IMR-90 (cell line): ENCODE measurements at regions of chr19 and their contacts with region 1.

Region 1: DNA sequence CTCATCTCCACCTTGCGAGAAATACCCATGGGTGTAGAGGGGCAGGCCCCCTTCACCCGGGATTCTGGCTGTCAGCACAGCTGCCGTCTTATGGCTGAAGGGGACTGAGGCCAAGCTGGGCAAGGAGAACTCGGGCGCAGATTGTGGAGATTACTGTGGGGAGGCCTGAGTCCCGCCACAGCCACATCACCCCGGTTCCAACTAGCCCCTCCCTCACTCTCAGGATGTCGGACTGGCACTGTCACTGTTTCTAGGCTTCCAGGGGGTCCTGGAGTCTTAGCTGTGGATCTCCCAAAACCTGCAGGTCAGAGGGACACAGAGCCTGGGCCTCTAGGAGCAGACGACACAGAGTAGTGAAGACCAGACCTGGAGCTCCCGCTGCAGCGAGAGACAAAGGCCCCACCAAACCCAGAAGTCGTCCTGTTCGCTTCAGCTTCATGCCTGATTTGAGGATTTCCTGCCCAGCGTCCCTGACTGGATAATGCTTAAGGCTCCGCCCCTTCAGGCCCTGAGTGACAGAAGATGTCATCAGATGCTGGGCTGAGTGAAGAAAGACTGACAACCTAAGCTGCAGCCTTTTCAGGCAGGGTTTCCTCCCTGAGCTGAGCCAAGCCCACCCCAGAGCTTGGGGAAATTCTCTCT is 55.8 kb downstream of the ZNF93 start:
- DNase-seq: no peak
- ATAC-seq: no peak
- H3K4me3 ChIP-seq: no peak overlapping the region
- H3K27ac ChIP-seq: no peak overlapping the region
- H3K4me1 ChIP-seq: peaks cover 7% of the 10 kb centered on the region
- H3K27me3 ChIP-seq: no peaks in the 10 kb centered on the region
- CTCF ChIP-seq: no peak
- POLR2A ChIP-seq: no peak
- RAD21 ChIP-seq: no peak

Region 2: DNA sequence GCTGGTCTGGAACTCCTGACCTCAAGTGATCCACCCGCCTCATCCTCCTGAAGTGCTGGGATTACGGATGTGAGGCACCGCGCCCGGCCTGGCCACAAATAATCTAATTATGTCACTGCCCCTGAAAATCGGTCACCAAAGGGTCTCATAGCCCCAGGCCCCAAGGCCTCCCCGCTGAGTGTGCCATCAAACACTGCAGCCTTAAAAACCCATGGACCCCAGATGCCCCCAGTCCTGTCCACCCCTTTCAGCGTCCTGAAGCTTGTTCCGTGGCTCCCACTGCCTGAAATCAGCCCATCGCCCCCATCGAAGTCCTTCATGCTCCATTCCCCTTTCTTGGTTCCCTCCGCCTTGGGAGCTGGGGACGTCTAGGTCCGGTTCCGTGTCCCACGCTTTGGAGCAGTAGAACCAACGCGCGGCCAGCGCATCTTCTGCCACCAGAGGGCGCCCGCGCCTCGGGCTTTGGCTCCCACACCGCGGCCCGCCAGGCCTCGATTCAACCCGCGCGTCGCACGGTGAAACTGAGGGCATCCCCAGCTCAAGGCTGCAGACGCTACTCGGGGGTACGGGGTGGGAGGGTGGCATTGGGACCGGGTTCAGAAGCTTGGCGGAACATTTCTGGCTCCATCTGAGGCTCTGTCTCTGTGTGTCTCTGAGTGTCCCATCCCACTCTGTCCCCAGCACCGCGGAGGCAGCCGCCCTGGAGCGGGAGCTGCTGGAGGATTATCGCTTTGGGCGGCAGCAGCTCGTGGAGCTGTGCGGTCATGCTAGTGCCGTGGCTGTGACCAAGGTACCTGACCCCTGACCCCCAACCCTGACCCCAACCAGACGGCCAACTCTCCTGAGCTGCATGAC is 424.4 kb before region 1 on chr19:
- CTCF ChIA-PET with region 1: no interaction called
- POLR2A ChIA-PET with region 1: no interaction called
- dilution Hi-C with region 1: no loop called
- in situ Hi-C with region 1: loop called (anchors 25 kb)
- intact Hi-C with region 1: no loop called
- DNase-seq: peak; percentile 44
- ATAC-seq: peak; percentile 81
- H3K4me3 ChIP-seq: no peak overlapping the region
- H3K27ac ChIP-seq: no peak overlapping the region
- H3K4me1 ChIP-seq: peaks cover 5% of the 10 kb centered on the region
- H3K27me3 ChIP-seq: no peaks in the 10 kb centered on the region
- CTCF ChIP-seq: peak; percentile 96
- POLR2A ChIP-seq: peak; percentile 59; the same call in 1 of the 2 replicates
- RAD21 ChIP-seq: peak; percentile 95

Region 3: DNA sequence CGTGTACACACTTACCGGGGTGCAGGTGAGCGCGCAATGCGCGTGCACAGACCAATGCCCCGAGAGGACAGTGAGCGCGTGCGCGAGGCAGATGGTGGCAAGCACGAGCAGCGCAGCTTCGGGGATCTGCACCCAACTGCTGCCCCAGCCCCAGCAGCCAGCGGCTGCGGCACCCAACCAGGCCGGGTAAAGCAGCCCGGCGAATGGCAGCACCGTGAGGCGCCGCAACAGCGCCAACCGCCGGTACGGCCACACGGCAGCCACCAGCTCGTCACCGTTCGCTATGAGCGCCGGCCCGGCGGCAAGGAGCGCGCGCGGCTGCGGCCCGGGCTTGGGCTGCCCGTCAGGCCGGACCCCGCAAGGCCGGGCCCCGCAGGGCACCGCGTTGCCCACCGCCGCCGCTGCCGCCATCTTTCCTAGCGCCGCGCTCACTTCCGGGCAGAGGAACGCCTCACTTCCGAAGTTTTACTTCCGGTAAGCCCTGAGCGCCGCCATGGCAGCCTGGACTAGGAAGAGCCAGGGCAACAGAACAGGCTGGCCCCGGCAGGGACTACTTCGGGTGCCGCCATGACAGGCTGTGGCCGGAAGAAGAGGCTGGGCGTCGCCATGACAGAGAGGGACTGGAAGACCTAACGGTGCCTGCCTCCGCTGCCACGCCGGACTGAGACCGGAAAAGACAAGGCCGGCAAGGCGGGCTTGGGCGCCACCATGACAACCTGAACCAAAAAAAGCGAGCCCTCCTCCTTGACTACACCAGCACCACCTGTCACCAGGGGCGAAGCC is 293.1 kb before region 1 on chr19 and contains the start of gene ATP13A1:
- CTCF ChIA-PET with region 1: no interaction called
- POLR2A ChIA-PET with region 1: no interaction called
- dilution Hi-C with region 1: no loop called
- in situ Hi-C with region 1: no loop called
- intact Hi-C with region 1: loop called (anchors 2 kb)
- DNase-seq: peak; percentile 97
- ATAC-seq: peak; percentile 95
- H3K4me3 ChIP-seq: peak within 1 kb of the TSS; percentile 78
- H3K27ac ChIP-seq: peak within 1 kb of the TSS; percentile 93
- H3K4me1 ChIP-seq: peaks cover 9% of the 10 kb centered on the region; the same call in 1 of the 2 replicates
- H3K27me3 ChIP-seq: no peaks in the 10 kb centered on the region
- CTCF ChIP-seq: no peak
- POLR2A ChIP-seq: peak; percentile 76
- RAD21 ChIP-seq: no peak
- total RNA-seq, gene ATP13A1: 13.3 and 15.8 TPM in 2 replicates

Region 4: DNA sequence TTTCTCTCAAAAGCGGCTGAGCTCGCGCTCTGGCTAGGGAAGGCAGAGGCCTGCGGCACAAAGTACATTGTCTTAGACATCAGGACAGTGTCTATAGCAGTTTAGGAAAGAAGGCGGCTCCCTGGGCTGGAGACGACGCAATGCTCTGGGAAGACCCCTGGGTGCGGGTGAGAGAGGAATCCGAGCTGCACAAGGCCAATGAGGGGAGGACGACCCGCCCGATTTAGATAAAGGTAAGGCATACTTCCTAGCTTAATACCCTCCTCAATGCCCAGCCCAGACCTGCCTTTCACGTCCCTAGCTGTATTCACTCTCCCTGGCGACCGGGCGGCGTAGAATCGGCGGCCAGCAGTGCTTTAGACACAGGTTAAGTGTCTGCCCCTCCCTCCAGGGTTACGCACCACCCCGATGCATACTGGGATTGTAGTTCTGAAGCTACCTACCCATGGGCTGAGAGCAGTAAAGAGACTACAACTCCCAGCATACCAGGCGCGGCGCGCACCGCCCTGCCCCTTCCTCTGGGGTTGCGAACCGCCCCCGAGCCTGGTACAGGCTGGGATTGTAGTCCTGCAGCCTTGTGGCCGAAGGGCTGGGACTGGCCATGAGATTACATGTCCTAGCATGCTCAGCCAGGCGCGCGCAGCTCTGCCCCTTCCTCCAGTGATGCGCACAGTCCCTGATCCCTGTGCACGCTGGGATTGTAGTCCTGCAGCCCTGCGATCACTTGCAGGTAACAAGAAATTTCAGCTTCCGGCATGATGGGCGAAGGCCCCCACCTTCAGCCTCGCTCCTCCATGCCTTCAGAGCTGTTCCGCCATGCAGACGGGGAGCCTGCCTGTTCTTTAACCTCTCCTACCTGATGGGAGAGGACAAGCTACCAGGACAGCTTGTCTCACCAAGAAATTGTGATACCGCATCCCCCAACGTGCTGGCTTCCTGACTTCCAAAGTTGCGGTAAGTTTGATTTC is 180.2 kb before region 1 on chr19:
- CTCF ChIA-PET with region 1: no interaction called
- POLR2A ChIA-PET with region 1: no interaction called
- dilution Hi-C with region 1: no loop called
- in situ Hi-C with region 1: no loop called
- intact Hi-C with region 1: loop called (anchors 2 kb)
- DNase-seq: peak; percentile 98
- ATAC-seq: peak; percentile 99
- H3K4me3 ChIP-seq: peak overlapping the region; percentile 73
- H3K27ac ChIP-seq: peak overlapping the region; percentile 82
- H3K4me1 ChIP-seq: 0 out of 2 replicates have a peak, but pooled peaks cover 2% of the 10 kb centered on the region
- H3K27me3 ChIP-seq: no peaks in the 10 kb centered on the region
- CTCF ChIP-seq: no peak
- POLR2A ChIP-seq: no peak
- RAD21 ChIP-seq: no peak

Region 5: DNA sequence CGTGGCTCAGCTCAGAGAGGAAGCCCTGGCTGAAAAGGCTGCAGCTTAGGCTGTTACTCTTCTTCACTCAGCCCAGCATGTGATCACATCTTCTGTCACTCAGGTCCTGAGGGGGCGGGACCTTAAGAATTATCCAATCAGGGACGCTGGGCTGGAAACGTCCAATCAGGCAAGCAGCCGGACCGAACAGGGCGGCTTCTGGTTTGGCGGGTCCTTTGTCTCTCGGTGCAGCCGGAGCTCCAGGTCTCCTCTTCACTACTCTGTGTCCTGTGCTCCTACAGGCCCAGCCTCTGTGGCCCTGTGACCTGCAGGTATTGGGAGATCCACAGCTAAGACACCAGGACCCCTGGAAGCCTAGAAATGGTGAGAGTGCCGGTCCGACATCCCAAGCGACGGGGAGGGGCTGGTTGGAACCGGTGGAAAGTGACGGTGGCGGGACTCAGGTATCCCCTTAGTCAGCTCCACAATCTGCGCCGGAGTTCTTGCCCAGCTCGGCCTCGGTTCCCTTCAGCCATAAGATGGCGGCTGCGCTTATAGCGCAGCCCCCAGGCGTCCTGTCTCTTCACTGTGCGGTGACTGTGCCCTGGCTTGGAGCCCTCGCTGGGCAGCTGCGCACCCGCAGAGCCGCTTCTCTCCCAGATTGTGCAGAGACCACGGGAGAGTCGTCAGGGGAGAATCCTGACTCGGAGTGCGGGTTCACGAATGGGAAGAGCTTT is 55.7 kb before region 1 on chr19 and contains the start of gene ZNF93:
- CTCF ChIA-PET with region 1: no interaction called
- POLR2A ChIA-PET with region 1: no interaction called
- dilution Hi-C with region 1: no loop called
- in situ Hi-C with region 1: no loop called
- intact Hi-C with region 1: loop called (anchors 2 kb)
- DNase-seq: peak; percentile 96
- ATAC-seq: peak; percentile 94
- H3K4me3 ChIP-seq: peak within 1 kb of the TSS; percentile 73
- H3K27ac ChIP-seq: peak within 1 kb of the TSS; percentile 83
- H3K4me1 ChIP-seq: no peaks in the 10 kb centered on the region
- H3K27me3 ChIP-seq: no peaks in the 10 kb centered on the region
- CTCF ChIP-seq: no peak
- POLR2A ChIP-seq: peak; percentile 67; the same call in 1 of the 2 replicates
- RAD21 ChIP-seq: no peak
- total RNA-seq, gene ZNF93: 8.9 and 10.6 TPM in 2 replicates

Region 6: DNA sequence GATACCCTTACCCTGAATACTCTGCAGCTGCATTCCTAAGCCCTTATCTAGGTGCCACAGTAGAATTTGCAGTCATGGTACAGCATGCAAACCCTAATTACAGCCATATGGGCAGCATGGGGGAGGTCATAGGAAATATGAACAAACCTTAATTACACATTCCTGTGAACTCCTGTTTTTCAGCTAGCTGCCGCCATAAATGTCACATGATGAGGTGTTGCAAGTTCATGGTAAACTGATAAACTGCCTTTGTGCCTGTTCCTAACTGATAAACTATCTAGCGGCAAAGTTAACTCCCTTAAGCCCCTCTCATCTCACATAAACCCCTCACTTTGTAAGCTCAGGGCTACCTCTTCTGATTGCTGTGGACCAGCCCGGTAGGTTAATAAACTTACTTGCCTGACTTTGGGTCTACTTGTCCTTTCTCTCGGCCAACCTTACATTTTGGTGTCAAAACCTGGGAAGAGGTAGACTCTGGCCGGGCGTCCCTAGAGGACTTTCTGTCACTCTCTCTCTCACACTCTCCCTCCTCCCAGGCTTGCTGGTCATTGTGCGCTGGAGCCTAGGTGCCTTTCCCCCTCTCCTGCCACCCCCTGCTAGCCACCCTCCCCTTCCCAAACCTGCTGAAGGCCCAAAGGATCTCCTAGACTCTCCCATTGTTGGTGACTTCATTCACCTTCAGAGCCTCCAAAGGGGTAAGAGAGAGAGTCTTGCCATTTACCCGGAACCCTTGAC is 12.5 kb before region 1 on chr19:
- CTCF ChIA-PET with region 1: no interaction called
- POLR2A ChIA-PET with region 1: no interaction called
- dilution Hi-C with region 1: no loop called
- in situ Hi-C with region 1: no loop called
- intact Hi-C with region 1: no loop called
- DNase-seq: no peak
- ATAC-seq: no peak
- H3K4me3 ChIP-seq: no peak overlapping the region
- H3K27ac ChIP-seq: no peak overlapping the region
- H3K4me1 ChIP-seq: no peaks in the 10 kb centered on the region
- H3K27me3 ChIP-seq: no peaks in the 10 kb centered on the region
- CTCF ChIP-seq: no peak
- POLR2A ChIP-seq: no peak
- RAD21 ChIP-seq: no peak